Ascending aorta (tissue), 2 donors: ENCODE measurements at regions of chr9 and their contacts with region 1.

Region 1: DNA sequence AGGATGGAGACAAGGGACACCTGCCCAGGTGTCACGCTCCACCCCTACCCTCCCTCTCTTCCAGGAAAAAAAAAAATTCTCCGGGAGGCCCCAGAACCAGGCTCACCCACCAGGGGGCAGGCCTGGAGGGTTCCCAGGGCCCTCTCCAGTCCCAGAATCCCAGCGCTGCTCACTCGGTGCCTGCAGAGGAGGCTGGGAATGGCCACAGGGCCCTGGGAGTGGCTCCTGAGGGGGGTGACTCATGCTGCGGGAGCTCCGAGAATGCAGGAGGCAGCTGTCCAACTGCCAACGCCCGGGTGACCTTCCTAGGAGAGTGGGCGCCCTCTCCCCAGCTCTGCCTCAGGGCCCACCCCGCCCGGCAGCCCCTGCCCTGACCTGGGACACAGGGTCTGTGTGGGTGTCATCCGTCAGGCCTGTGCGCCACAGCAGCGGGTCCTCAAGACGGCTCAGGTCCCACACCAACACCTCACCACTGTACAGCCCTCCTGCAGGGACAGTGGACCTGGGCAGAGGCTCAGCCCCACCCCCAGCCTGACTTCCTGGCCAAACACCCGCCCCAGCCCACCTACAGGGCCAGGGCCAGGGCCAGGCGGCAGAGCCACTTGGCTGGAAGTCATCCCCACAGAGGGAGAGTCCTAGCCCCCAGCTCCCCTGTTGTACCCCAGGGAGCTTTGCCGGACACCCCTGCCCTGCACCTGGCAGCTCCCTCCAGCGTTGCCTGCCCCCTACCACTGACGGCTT is 21.2 kb downstream of the DYNC2I2 start:
- DNase-seq: peak; percentile 47 to 96
- H3K4me3 ChIP-seq: peak overlapping the region in 1 of 2 donors; percentile 12
- H3K27ac ChIP-seq: peak overlapping the region; percentile 90 to 98
- H3K4me1 ChIP-seq: peaks cover 6 to 17% of the 10 kb centered on the region in 2 donors
- H3K27me3 ChIP-seq: no peaks in the 10 kb centered on the region
- CTCF ChIP-seq: peak; percentile 63 to 81 (median 73)

Region 2: GRCh38 chr9:128656416-128657343 is 21.2 kb after region 1 on chr9 and contains the start of gene DYNC2I2:
- intact Hi-C with region 1: loop called (anchors 1 kb)
- DNase-seq: peak; percentile 76 to 96
- H3K4me3 ChIP-seq: peak within 1 kb of the TSS; percentile 78 to 84
- H3K27ac ChIP-seq: peak within 1 kb of the TSS; percentile 91 to 96
- H3K4me1 ChIP-seq: peaks cover 0 to 4% of the 10 kb centered on the region in 2 donors
- H3K27me3 ChIP-seq: no peaks in the 10 kb centered on the region
- CTCF ChIP-seq: no peak
- total RNA-seq, gene DYNC2I2: 49.9 TPM

Region 3: GRCh38 chr9:128677794-128678193 is 42.3 kb after region 1 on chr9:
- intact Hi-C with region 1: no loop called
- DNase-seq: no peak
- H3K4me3 ChIP-seq: no peak overlapping the region
- H3K27ac ChIP-seq: no peak overlapping the region
- H3K4me1 ChIP-seq: no peaks in the 10 kb centered on the region
- H3K27me3 ChIP-seq: no peaks in the 10 kb centered on the region
- CTCF ChIP-seq: no peak

Region 4: GRCh38 chr9:128688512-128689292 is 53.2 kb after region 1 on chr9 and contains the start of gene SET:
- intact Hi-C with region 1: loop called (anchors 1 kb)
- DNase-seq: peak; percentile 66 to 95
- H3K4me3 ChIP-seq: peak within 1 kb of the TSS; percentile 89 to 91
- H3K27ac ChIP-seq: peak within 1 kb of the TSS; percentile 86 to 98
- H3K4me1 ChIP-seq: peaks cover 10 to 14% of the 10 kb centered on the region in 2 donors
- H3K27me3 ChIP-seq: no peaks in the 10 kb centered on the region
- CTCF ChIP-seq: no peak
- total RNA-seq, gene SET: 102 TPM

Region 5: DNA sequence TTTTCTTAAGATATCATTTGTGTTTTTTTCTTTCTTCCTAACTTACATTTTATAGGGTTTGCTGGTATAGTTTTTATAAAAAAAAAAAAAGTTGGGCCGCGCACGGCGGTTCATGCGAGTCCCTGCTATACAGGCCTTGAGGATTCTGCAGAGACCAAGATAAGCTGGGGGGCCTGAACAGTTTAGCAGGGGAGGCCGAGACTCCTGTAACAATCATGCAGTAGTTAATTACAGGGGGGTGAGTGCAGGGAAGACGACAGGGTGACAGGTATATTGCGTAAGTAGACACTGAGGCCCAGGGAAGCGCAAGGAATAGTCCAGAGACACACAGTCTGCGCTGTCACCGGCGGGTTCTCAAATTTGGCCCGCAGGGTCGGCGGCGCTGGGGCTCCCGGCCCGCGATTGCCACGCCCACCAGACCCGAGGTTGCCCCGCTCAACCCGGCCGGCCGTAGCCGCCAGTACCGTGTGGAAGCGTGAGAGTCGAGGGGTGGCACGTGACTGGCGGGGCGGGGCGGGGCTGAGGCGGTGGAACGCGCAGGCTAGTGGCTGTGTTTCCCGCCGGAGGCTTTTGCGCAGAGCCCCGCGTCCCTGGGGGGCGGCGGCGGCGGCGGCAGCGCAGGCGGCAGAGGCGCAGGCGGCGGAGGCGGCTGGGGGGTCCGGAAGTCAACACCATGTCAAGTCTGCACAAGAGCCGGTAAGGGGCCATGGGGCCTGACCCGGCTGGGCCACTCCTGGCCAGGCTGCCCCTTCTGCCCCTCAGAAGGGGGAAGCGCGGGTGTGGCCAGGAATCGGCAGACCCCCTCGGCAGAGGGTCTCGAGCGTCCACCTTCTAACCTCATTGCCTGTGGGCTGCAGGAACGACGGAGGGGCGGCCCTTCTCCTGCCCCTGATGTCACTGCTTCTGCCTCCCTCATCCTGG is 151.5 kb after region 1 on chr9 and contains the start of gene TBC1D13:
- intact Hi-C with region 1: loop called (anchors 5 kb)
- DNase-seq: peak; percentile 53 to 93
- H3K4me3 ChIP-seq: peak within 1 kb of the TSS; percentile 59 to 97
- H3K27ac ChIP-seq: peak within 1 kb of the TSS; percentile 78 to 83
- H3K4me1 ChIP-seq: peaks cover 4 to 6% of the 10 kb centered on the region in 2 donors
- H3K27me3 ChIP-seq: no peaks in the 10 kb centered on the region
- CTCF ChIP-seq: no peak
- total RNA-seq, gene TBC1D13: 19.8 TPM